ENCODE measurements at regions of chr17 and their contacts with region 1.

Region 1: GRCh38 chr17:79749156-79749815 is 18.5 kb downstream of the ENPP7 start:
- DNase-seq: no peak
- ATAC-seq: no peak
- H3K4me3 ChIP-seq: no peak overlapping the region
- H3K4me3 Mint-ChIP-seq: no peak overlapping the region
- H3K27ac ChIP-seq: no peak overlapping the region
- H3K27ac Mint-ChIP-seq: no peak overlapping the region
- H3K4me1 ChIP-seq: peaks cover 24% of the 10 kb centered on the region
- H3K4me1 Mint-ChIP-seq: peaks cover 17% of the 10 kb centered on the region
- H3K27me3 ChIP-seq: peaks cover 20 to 31% of the 10 kb centered on the region in 2 experiments
- H3K27me3 Mint-ChIP-seq: peaks cover 46% of the 10 kb centered on the region
- CTCF ChIP-seq: no peak

Region 2: DNA sequence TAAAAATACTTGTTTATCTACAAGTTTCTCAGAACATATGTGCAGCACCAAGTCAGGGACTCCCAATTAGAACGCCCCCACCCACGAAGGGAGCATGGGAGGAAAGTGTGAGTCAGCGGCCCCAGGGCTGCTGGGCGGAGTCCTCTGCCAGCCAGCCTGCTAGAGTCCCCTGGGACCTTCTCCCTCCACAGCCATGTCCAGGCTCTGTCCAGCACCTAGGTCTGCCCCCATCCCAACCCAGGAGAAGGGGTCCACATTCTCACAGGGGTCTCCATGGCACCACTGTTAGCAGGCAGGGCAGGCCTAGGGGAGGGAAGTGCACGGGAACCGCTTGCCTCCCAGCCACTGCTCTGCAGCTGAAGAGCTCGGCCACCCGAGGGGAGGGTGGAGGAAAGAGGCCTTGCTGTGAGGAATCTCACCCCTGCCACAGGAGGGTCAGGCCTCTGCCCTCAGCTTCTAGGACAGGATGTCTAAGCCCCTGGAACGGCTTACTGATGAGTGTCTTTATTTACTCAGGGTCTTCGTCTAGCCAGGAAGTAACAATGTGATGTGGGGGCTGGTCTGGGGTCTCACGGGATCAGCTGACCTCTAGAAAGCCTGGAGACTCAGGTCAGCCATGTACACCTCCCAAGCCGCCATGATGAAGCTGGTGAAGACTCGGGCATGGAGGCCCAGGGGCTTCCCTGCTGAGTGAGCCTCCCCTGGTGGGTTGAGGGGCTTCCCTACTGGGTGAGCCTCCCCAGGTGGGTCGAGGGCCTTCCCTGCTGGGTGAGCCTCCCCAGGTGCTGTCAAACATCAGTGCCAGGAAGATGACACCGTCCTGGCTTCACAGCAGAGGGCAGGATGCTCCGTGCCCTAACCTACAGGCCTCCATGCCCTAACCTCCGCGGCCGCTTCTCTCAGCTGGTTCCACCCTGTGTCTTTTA is 328.7 kb before region 1 on chr17:
- CTCF ChIA-PET with region 1: no interaction called
- POLR2A ChIA-PET with region 1: no interaction called
- intact Hi-C with region 1: no loop called
- DNase-seq: peak in 1 of 9 experiments; percentile 12
- ATAC-seq: no peak
- H3K4me3 ChIP-seq: no peak overlapping the region
- H3K4me3 Mint-ChIP-seq: no peak overlapping the region
- H3K27ac ChIP-seq: no peak overlapping the region
- H3K27ac Mint-ChIP-seq: no peak overlapping the region
- H3K4me1 ChIP-seq: no peaks in the 10 kb centered on the region
- H3K4me1 Mint-ChIP-seq: no peaks in the 10 kb centered on the region
- H3K27me3 ChIP-seq: no peaks in the 10 kb centered on the region
- H3K27me3 Mint-ChIP-seq: peaks cover 16% of the 10 kb centered on the region
- CTCF ChIP-seq: no peak

Region 3: GRCh38 chr17:79789534-79790353 is 40.5 kb after region 1 on chr17:
- CTCF ChIA-PET with region 1: interaction called, 4 read pairs
- POLR2A ChIA-PET with region 1: no interaction called
- intact Hi-C with region 1: loop called in 1 of 2 experiments (anchors 1 kb)
- DNase-seq: peak in 2 of 9 experiments; percentile 54 to 56
- ATAC-seq: peak; percentile 24
- H3K4me3 ChIP-seq: no peak overlapping the region
- H3K4me3 Mint-ChIP-seq: peak overlapping the region; percentile 29
- H3K27ac ChIP-seq: no peak overlapping the region
- H3K27ac Mint-ChIP-seq: no peak overlapping the region
- H3K4me1 ChIP-seq: peaks cover 27% of the 10 kb centered on the region
- H3K4me1 Mint-ChIP-seq: peaks cover 14% of the 10 kb centered on the region
- H3K27me3 ChIP-seq: peaks cover 33 to 39% of the 10 kb centered on the region in 2 experiments
- H3K27me3 Mint-ChIP-seq: peaks cover 49% of the 10 kb centered on the region
- CTCF ChIP-seq: peak; percentile 56

Region 4: GRCh38 chr17:79810130-79811010 is 61.1 kb after region 1 on chr17:
- CTCF ChIA-PET with region 1: interaction called, 4 read pairs
- POLR2A ChIA-PET with region 1: no interaction called
- intact Hi-C with region 1: loop called in 1 of 2 experiments (anchors 1 kb)
- DNase-seq: peak; percentile 48 to 91 (median 74)
- ATAC-seq: peak; percentile 91
- H3K4me3 ChIP-seq: no peak overlapping the region
- H3K4me3 Mint-ChIP-seq: no peak overlapping the region
- H3K27ac ChIP-seq: no peak overlapping the region
- H3K27ac Mint-ChIP-seq: no peak overlapping the region
- H3K4me1 ChIP-seq: peaks cover 40% of the 10 kb centered on the region
- H3K4me1 Mint-ChIP-seq: peaks cover 28% of the 10 kb centered on the region
- H3K27me3 ChIP-seq: peaks cover 75 to 82% of the 10 kb centered on the region in 2 experiments
- H3K27me3 Mint-ChIP-seq: peaks cover 67% of the 10 kb centered on the region
- CTCF ChIP-seq: no peak

Region 5: DNA sequence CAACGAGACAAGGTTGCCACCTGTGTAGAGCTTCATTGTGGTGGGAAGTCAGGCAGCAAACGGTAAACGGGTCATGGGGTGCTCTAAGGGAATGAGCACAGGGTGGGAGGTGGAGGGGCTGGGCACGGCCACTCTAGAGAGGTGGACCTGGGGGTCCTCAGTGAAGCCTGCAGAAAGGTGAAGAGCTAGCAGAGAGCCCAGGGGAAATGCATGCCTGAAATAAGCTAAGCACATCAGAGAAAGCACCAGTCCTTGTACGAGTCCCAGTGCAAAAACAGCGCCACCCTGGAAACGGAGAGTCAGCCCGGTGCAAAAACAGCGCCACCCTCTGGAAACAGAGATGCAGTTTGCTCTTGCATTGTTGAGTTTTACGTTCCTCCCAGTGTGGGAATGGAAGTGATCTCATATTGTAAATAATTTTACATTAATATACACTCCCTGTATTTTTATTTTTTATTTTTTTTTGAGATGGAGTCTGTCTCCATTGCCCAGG is 221.3 kb after region 1 on chr17:
- CTCF ChIA-PET with region 1: interaction called, 15 read pairs
- POLR2A ChIA-PET with region 1: no interaction called
- intact Hi-C with region 1: loop called in 1 of 2 experiments (anchors 1 kb)
- DNase-seq: peak in 3 of 9 experiments; percentile 41 to 83 (median 76)
- ATAC-seq: peak; percentile 55
- H3K4me3 ChIP-seq: no peak overlapping the region
- H3K4me3 Mint-ChIP-seq: no peak overlapping the region
- H3K27ac ChIP-seq: no peak overlapping the region
- H3K27ac Mint-ChIP-seq: no peak overlapping the region
- H3K4me1 ChIP-seq: peaks cover 4% of the 10 kb centered on the region
- H3K4me1 Mint-ChIP-seq: peaks cover 7% of the 10 kb centered on the region
- H3K27me3 ChIP-seq: no peaks in the 10 kb centered on the region
- H3K27me3 Mint-ChIP-seq: no peaks in the 10 kb centered on the region
- CTCF ChIP-seq: peak; percentile 44